ENCODE measurements at regions of chr20 and their contacts with region 1.

Region 1: GRCh38 chr20:25399037-25399430 is 8.4 kb upstream of the ABHD12 start:
- DNase-seq: peak; percentile 52 to 67
- H3K4me3 ChIP-seq: no peak overlapping the region
- H3K27ac ChIP-seq: no peak overlapping the region
- H3K4me1 ChIP-seq: peaks cover 25% of the 10 kb centered on the region
- H3K27me3 ChIP-seq: no peaks in the 10 kb centered on the region
- CTCF ChIP-seq: peak; percentile 65

Region 2: DNA sequence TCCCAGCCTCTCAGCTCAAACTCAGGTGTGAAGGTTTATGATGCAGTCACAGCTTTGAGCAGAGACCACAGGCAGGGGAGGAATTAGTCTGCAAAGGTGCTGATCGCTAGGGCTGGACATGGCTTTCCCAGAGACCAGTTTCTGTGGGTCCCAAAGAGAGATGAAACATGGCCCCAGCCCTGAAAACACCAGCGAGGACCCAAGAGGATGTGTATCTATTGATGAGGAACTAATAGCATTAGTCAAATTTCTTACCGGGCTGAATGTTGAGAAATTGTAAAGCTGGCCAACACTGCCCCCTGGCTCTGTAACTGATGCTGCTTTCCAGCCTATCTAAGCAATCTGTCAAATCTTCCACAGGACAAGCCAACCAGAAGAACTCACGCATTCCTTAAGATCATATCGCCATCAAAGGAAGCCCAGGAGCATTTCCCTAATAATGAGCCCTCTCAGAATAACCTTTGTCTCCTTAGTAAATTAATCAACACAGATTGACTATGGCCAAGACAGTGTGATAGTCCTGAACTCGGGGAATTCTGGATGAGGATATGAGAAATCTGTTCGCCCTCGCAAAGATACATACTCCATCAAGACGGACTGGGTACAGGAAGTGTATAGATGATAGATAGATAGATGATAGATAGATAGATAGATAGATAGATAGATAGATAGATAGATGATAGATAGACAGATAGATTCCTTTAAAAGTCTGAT is 333.3 kb before region 1 on chr20:
- CTCF ChIA-PET with region 1: no interaction called
- POLR2A ChIA-PET with region 1: no interaction called
- intact Hi-C with region 1: loop called (anchors 2 kb)
- DNase-seq: peak; percentile 68 to 76
- H3K4me3 ChIP-seq: no peak overlapping the region
- H3K27ac ChIP-seq: no peak overlapping the region
- H3K4me1 ChIP-seq: peaks cover 24% of the 10 kb centered on the region
- H3K27me3 ChIP-seq: no peaks in the 10 kb centered on the region
- CTCF ChIP-seq: peak; percentile 83

Region 3: DNA sequence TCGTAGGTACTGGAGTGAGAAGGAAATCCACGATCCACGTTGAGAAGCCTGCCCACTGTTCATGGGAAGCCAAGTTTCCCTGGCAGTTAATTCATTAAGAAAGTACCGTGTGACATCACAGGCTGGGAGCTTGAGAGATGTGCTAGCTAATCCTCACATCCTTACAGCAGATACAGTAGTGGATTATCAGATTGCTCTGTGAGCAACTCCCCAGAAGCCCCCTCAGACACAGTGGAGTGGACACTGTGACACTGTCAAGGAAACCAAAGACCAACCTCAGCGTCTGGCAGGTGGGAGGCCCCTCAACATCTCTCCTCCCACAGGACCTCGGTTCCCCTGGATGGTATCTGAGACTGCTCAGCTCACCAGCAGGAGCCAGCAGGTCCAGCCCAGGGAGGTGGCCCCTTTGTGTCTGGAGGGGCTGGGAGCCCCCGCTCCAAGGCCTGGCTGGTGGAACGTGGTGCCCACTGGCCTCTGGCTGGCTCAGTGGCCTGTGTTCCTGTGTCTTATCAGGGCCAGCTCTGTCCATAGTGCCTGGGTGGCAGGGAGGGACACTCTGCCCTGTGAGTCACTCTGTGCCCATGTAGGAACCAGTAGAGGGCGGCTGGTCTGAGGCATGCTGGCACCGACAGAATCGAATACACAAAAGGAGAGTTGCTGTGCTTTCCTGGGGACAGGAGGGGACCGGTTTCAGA is 143.9 kb before region 1 on chr20:
- CTCF ChIA-PET with region 1: interaction called, 12 read pairs
- POLR2A ChIA-PET with region 1: no interaction called
- intact Hi-C with region 1: no loop called
- DNase-seq: peak in 1 of 2 experiments; percentile 89
- H3K4me3 ChIP-seq: no peak overlapping the region; the same call in 1 of the 2 replicates
- H3K27ac ChIP-seq: peak overlapping the region; percentile 86; the same call in 1 of the 2 replicates
- H3K4me1 ChIP-seq: peaks cover 65% of the 10 kb centered on the region
- H3K27me3 ChIP-seq: no peaks in the 10 kb centered on the region
- CTCF ChIP-seq: no peak

Region 4: DNA sequence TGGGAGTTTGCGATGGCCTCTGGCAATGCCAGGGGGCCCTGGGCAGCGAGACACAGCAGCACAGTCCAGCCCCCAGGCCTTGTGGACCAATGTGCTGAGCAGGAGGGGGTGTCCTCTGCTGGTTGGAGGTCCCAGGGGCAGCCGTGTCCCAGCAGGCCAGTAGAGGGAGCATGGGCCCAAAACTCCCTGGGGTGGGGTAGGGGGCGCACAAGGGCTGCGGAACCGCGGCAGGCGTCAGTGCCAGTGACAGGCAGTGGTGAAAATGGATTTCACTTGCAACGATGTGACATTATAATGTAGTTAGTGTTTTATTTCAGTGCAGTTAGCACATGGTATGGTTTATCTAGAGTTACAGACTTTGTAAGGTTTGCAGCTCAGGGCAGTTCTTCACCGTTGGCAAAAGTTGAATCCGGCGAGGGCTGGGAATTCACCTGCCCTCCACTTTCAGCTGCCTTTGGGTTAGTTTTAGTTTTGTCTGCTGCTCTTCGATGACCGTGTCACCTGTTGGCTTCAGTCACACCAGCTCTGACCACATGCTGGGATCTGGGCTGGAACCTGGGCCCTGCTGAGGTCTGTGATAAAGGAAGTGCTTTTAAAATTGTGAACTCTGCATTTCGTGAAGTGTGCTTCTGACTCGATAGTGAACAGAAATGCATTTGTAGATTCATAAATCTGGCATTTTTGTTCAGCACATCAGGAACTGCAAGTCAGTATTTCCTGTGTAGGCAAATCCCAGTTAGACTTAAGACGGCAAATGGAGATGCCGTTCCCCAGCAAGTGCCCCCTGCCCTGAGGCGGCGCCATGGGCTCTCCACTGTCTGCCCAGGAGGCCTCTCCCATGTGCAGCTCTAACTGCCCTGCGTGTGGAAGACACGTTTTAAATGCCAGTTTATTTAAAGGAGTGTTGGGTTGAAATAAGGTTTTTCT is 104.3 kb before region 1 on chr20:
- CTCF ChIA-PET with region 1: interaction called, 11 read pairs
- POLR2A ChIA-PET with region 1: no interaction called
- intact Hi-C with region 1: loop called (anchors 1 kb)
- DNase-seq: peak in 1 of 2 experiments; percentile 51
- H3K4me3 ChIP-seq: no peak overlapping the region
- H3K27ac ChIP-seq: no peak overlapping the region
- H3K4me1 ChIP-seq: no peaks in the 10 kb centered on the region
- H3K27me3 ChIP-seq: no peaks in the 10 kb centered on the region
- CTCF ChIP-seq: peak; percentile 64

Region 5: DNA sequence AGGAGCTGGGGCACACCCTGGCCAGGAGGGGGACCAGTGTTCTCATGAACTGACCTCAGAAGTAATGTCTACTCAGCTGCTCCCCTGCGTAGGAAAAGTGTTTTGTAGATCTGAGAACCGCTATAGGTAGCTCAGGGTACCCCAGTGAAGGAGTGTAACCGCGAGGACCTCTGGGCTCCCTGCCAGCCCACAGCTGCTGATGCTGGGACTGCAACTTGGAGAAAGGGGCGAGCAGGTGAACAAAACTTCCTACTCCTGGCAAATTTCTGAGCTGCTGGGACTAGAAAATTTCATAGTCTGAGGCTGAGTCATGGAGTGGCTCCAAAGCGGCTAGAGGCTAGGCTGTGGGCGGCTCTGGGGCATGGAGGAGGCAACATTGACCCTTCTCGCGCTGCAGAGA is 99.2 kb before region 1 on chr20:
- CTCF ChIA-PET with region 1: interaction called, 11 read pairs
- POLR2A ChIA-PET with region 1: no interaction called
- intact Hi-C with region 1: loop called (anchors 2 kb)
- DNase-seq: peak; percentile 47 to 49
- H3K4me3 ChIP-seq: no peak overlapping the region
- H3K27ac ChIP-seq: no peak overlapping the region; the same call in 1 of the 2 replicates
- H3K4me1 ChIP-seq: no peaks in the 10 kb centered on the region
- H3K27me3 ChIP-seq: no peaks in the 10 kb centered on the region
- CTCF ChIP-seq: no peak

Region 6: DNA sequence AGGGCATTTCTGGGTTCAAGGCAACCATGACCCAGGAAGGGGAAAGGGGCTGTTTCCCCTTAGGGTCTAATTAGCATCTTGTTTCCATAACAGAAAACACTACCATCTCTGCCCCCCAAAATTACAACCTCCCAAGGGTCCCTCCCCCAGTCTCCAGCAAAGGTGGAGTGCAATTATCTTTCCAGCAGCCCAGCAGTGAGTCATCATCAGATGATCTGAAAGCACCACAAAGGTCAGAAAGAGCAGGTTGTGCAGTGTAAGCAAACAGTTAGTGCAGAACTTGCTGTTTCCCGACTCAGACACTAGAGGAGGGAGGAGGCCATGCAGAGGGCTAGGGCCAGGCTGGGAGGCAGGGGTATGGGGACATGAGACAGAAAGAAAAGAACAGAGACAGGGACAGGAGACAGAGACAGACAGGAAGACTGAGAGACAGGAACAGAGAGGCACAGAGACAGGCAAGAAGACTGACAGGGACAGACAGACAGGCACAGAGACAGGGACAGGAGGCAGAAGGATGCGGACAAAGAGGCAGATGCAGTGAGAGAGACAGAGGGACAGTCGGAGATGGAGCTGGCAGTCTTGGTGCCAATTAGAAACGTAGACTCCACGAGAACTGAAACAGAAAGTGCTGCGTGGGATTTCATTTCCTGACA is 88.6 kb before region 1 on chr20:
- CTCF ChIA-PET with region 1: interaction called, 4 read pairs
- POLR2A ChIA-PET with region 1: no interaction called
- intact Hi-C with region 1: loop called (anchors 1 kb)
- DNase-seq: peak; percentile 71 to 91
- H3K4me3 ChIP-seq: peak overlapping the region; percentile 39; the same call in 1 of the 2 replicates
- H3K27ac ChIP-seq: peak overlapping the region; percentile 80
- H3K4me1 ChIP-seq: peaks cover 43% of the 10 kb centered on the region
- H3K27me3 ChIP-seq: no peaks in the 10 kb centered on the region
- CTCF ChIP-seq: peak; percentile 68

Region 7: DNA sequence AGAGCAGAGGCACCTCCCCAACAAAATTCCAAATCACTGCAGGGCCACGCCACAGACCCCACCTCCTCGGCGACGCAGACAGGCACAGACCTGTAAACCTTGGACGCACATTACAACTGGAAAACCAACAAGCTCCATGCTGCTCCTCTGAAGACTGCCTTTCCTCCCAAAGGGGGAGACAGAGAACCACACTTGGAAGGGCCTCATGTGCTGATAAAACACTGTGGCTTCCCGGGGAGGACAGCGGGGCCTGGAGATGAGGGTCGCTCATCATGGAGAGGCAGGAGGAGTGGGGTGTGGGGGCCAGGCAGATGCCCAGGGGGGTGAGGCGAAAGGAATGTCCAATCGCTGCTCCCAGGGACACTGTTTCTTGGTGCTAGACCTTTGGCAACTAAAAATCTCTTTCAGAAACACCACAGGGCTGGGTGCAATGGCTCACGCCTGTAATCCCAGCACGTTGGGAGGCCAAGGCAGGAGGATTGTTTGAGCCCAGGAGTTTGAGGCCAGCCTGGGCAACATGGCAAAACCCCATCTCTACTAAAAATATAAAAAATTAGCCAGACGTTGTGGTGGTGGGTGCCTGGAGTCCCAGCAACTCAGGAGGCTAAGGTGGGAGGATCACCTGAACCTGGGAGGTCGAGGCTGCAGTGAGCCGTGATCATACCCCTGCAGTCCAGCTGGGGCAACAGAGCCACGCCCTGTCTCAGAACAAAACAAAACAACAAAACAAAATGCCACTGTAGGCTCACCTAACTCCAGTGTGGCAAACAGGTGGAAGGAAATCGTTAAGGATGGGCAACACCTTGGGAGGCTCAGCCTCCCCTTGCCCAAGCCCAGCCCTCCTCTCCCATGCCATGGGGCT is 62.2 kb before region 1 on chr20:
- CTCF ChIA-PET with region 1: interaction called, 3 read pairs
- POLR2A ChIA-PET with region 1: no interaction called
- intact Hi-C with region 1: loop called (anchors 2 kb)
- DNase-seq: no peak
- H3K4me3 ChIP-seq: no peak overlapping the region
- H3K27ac ChIP-seq: no peak overlapping the region
- H3K4me1 ChIP-seq: no peaks in the 10 kb centered on the region
- H3K27me3 ChIP-seq: no peaks in the 10 kb centered on the region
- CTCF ChIP-seq: peak; percentile 46

Region 8: GRCh38 chr20:25372584-25373336 is 26.3 kb before region 1 on chr20:
- CTCF ChIA-PET with region 1: no interaction called
- POLR2A ChIA-PET with region 1: no interaction called
- intact Hi-C with region 1: no loop called
- DNase-seq: peak in 1 of 2 experiments; percentile 65
- H3K4me3 ChIP-seq: no peak overlapping the region
- H3K27ac ChIP-seq: no peak overlapping the region
- H3K4me1 ChIP-seq: no peaks in the 10 kb centered on the region
- H3K27me3 ChIP-seq: no peaks in the 10 kb centered on the region
- CTCF ChIP-seq: no peak

Measured in PC-9 (cell line).